ENCODE measurements at regions of chr7 and their contacts with region 1.

Region 1: GRCh38 chr7:77657427-77658224 is 38.6 kb upstream of the RSBN1L start:
- DNase-seq: no peak
- H3K4me3 Mint-ChIP-seq: no peak overlapping the region
- H3K27ac Mint-ChIP-seq: no peak overlapping the region
- H3K4me1 Mint-ChIP-seq: no peaks in the 10 kb centered on the region
- H3K27me3 Mint-ChIP-seq: peaks cover under 1% of the 10 kb centered on the region

Region 2: DNA sequence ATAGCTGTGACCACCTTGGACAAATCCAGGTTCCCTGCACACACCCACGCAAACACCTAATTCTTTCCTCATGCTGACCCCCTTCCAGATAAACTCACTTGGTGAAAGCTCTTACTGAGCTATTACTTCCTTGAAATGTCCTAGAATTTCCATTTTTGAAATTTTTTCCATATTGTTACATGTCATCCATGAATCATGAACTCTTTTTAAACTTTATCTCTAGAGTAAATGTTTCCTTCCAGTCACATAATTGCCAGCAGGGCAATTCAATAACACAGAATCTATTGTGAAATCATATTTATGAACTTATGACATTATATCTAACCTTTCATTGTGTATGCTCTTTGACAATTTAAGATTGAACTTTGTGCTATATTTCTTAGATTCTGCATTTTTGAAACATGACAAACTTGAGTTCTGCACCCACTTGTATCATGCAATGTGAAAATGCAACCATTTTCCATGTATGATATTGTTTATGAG is 431.2 kb before region 1 on chr7:
- CTCF ChIA-PET with region 1: no interaction called
- DNase-seq: no peak
- H3K4me3 Mint-ChIP-seq: no peak overlapping the region
- H3K27ac Mint-ChIP-seq: no peak overlapping the region
- H3K4me1 Mint-ChIP-seq: peaks cover 21% of the 10 kb centered on the region
- H3K27me3 Mint-ChIP-seq: no peaks in the 10 kb centered on the region

Region 3: GRCh38 chr7:77644774-77645173 is 12.9 kb before region 1 on chr7:
- CTCF ChIA-PET with region 1: no interaction called
- DNase-seq: no peak
- H3K4me3 Mint-ChIP-seq: no peak overlapping the region
- H3K27ac Mint-ChIP-seq: no peak overlapping the region
- H3K4me1 Mint-ChIP-seq: no peaks in the 10 kb centered on the region
- H3K27me3 Mint-ChIP-seq: no peaks in the 10 kb centered on the region

Region 4: DNA sequence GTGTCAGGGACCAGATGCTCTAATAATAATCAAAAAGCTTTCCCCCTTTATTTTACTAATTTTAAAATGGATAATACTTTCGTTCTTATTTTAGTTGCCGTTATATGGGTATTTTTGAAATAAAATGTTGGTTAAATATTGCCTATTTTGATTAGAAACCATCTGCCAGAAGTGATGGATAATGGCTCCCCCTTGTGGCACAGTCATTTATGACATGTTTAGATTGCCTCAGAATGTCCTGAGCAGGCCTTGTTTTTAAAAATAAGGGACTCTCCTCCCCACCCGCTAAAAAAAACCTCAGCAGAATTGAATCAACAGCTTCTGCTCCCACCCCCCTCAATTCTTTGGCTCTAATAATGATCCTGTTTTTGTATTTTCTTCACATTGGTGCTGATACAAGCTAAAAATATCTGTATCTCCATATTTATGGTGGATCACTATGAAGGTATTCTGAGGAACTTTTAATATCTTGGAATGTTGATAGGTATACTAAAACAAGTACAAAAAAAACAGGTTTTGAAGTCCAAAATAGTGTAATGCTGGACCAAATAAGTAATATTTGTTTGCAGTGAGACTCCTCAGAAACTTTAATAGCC is 101.8 kb after region 1 on chr7:
- CTCF ChIA-PET with region 1: interaction called, 41 read pairs
- DNase-seq: peak; percentile 74
- H3K4me3 Mint-ChIP-seq: no peak overlapping the region
- H3K27ac Mint-ChIP-seq: no peak overlapping the region
- H3K4me1 Mint-ChIP-seq: peaks cover 5% of the 10 kb centered on the region
- H3K27me3 Mint-ChIP-seq: no peaks in the 10 kb centered on the region

Region 5: DNA sequence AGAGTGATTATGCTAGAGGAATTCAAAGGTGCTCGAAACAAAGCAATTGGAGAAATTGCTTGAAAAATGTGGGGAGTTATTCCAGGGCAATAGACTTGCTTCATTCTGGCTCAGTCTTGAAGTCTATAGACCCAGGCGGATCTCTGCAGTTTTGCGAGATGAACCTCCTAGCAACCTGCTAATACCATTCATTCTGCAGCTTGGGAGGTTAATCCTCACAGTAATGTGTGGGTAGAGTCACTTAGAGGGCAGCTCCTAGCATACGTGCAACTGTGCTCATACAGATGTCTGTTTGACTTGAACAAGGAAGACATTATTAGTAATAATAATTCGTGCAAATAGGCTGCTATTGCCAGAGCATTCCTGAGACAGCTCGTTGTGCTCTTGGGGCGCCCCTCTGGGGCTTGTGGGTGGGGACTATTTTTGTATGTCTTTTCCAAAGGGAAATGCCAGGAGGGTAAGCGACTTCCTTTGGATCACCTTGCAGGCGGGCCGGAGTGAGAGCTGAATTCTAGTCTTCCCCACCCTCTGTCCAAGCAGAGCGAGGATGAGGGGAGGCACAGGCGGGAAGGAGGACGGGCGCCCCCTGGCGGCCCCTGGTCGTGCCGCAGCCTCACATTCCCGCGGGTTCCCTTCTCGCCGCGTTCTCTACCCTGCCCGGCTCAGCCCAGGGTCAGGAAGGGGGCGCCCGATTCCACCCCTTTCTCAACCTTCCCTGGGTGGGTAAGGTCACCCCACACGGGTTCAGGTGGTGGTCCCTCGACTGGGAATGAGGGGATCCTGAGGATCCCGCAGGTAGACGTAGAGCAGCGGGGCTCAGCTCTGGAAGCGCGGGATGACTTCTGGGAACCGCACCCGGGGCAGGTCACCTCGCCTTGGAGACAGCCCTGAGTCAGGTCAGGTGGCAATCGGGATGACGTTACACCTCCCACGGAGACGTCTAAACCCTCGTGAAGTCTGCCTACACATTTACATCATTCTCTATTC is 382.5 kb after region 1 on chr7:
- CTCF ChIA-PET with region 1: interaction called, 12 read pairs
- DNase-seq: peak; percentile 65
- H3K4me3 Mint-ChIP-seq: no peak overlapping the region
- H3K27ac Mint-ChIP-seq: no peak overlapping the region
- H3K4me1 Mint-ChIP-seq: no peaks in the 10 kb centered on the region
- H3K27me3 Mint-ChIP-seq: peaks cover 29% of the 10 kb centered on the region

Measured in activated naive CD4-positive, alpha-beta T cell treated with anti-CD3 and anti-CD28 coated beads, Interleukin-2, amount 10 ng/mL, durations not matched to agents 7 days and 5 days (primary cell).